Pancreas (tissue), 10 donors: ENCODE measurements at regions of chr20 and their contacts with region 1.

Region 1: DNA sequence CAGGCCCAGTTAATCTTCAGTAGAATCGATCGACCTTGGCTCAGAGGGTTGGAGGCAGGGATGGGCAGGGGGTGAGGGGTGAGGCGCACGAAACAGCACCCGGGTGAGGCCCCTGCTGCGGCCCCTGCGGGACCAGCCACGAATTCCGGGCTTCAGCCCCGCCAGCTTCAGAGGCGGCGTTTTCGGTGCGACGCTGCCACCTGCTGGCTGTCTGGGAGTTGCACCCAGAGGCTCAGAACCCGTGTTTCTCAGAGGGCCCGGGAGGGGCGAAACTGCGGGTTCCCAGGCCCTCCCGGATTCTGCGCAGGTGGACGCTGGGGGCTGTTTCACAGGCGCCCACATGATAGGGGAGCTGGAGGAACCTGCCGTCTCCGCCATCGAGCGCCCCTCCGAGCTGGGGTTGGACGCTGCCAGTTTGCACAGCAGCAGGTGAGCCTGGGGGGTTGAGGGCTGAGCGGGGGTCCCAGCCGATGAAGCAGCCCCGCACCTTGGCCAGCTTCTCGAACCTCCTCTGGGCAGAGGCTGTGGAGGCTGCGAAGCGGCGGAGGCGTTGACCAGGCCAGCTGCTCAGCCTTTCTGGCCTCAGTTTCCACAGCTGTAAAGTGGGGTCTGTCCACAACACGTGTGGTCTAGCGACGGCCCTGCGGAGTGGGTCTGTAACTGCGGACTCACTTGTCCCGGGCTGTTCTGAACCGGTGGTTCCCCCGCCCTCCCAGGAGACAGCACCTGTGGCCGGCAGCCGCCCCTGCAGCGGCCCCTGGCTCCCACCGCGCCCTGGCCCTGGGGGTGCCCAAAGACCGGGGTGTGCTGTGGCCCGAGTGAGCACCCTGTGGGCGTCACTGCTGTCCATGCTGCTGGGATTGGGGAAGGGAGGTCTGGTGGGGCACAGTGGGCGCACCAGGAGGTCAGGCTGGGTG is 2.5 kb upstream of the BHLHE23 start:
- DNase-seq: peak; percentile 46 to 93 (median 78)
- ATAC-seq: peak; percentile 83 to 96 (median 93)
- H3K4me3 ChIP-seq: peak overlapping the region in 1 of 4 donors; percentile 11
- H3K27ac ChIP-seq: no peak overlapping the region
- H3K4me1 ChIP-seq: no peaks in the 10 kb centered on the region
- H3K27me3 ChIP-seq: peaks cover 0 to 71% (median 17%) of the 10 kb centered on the region in 4 donors
- CTCF ChIP-seq: peak; percentile 82 to 92 (median 86)

Region 2: GRCh38 chr20:62583420-62583920 is 425.8 kb before region 1 on chr20:
- intact Hi-C with region 1: no loop called
- DNase-seq: no peak
- ATAC-seq: no peak
- H3K4me3 ChIP-seq: no peak overlapping the region
- H3K27ac ChIP-seq: no peak overlapping the region
- H3K4me1 ChIP-seq: no peaks in the 10 kb centered on the region
- H3K27me3 ChIP-seq: peaks cover 0 to 13% (median 0%) of the 10 kb centered on the region in 4 donors
- CTCF ChIP-seq: no peak

Region 3: DNA sequence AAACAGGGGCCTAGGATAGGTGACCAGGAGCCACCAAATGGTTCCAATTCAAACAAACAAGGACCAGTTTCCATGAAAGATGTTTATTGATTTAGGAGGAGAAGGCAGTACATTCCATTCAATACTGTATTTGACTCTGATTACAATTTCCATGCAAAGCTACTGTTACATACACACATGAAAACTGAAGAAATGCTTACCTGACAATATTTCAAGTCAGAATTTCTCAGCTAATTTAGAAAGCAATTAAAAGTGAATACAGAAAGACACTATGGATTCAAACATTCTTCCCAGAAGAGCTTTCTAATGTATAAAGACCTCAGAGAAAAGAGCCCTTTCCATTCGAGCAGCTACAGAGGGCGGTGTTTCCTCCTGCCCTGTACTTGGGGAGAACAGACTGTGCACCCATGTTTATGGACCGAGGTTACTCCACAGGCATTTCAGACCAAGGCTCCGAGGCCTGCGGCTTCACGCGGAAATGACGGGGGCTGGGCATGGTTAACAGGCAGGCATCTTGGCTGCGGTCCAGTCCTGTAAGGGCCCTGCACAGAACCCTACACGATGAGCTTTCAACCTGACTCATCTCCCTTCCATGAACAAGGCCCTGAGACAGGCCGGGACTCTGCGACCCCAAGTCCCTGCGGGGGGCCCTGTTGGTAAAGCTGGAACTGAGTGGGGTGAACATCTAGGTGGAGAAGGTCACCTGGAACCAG is 122.0 kb before region 1 on chr20:
- intact Hi-C with region 1: loop called in 2 of 3 experiments (anchors 5 to 10 kb)
- DNase-seq: no peak
- ATAC-seq: peak in 2 of 4 donors; percentile 51 to 53
- H3K4me3 ChIP-seq: no peak overlapping the region
- H3K27ac ChIP-seq: no peak overlapping the region
- H3K4me1 ChIP-seq: no peaks in the 10 kb centered on the region
- H3K27me3 ChIP-seq: no peaks in the 10 kb centered on the region
- CTCF ChIP-seq: no peak

Region 4: GRCh38 chr20:62899690-62900051 is 109.6 kb before region 1 on chr20:
- intact Hi-C with region 1: loop called in 2 of 3 experiments (anchors 5 to 10 kb)
- DNase-seq: no peak
- ATAC-seq: peak; percentile 23 to 51 (median 32)
- H3K4me3 ChIP-seq: no peak overlapping the region
- H3K27ac ChIP-seq: peak overlapping the region in 1 of 4 donors; percentile 2
- H3K4me1 ChIP-seq: peaks cover 0 to 8% (median 4%) of the 10 kb centered on the region in 3 donors
- H3K27me3 ChIP-seq: no peaks in the 10 kb centered on the region
- CTCF ChIP-seq: no peak